Vagina (tissue), 2 donors: ENCODE measurements at regions of chr9 and their contacts with region 1.

Region 1: DNA sequence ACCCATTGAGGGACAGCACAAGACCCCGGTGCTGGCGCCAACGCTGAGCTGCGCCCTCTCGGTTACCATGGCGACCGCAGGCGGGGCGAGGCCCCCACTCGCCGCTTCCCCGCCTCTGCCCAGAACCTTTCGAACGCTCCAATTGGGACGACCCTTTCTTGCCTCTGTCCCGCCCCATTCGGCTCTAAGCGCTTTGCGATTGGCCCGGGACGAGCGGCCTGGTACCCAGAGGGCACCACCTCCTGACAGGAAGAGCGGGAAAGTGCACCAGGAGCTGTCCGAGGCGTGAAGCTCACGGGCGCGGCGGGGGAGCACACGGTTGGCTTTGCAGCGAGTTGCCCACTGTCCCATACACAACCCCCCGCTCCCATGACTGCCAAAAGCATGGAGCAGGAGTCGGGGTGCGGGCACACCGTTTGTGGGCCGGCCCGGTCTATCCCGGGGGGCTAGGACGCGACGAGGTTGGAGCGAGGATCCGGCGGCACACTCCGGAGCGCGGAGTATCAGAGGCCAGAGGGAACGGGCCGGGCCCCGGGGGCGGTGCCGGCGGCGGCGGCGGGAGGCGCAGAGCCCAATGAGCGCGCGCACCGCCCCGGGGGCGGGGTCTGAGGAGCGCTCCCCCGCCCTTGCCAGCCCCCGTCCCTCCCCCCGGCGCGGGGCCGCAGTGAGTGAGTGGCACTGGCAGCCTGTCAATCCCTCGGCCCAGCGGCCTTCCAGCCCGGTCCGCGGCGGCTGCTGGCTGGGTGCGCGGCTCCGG is 978 bp upstream of the PBX3 start:
- DNase-seq: peak in 1 of 2 donors; percentile 97
- H3K4me3 ChIP-seq: peak overlapping the region; percentile 70 to 76
- H3K27ac ChIP-seq: peak overlapping the region; percentile 91
- H3K4me1 ChIP-seq: peaks cover 19% of the 10 kb centered on the region
- H3K27me3 ChIP-seq: no peaks in the 10 kb centered on the region
- CTCF ChIP-seq: no peak
- POLR2A ChIP-seq: peak in 1 of 2 donors; percentile 65

Region 2: GRCh38 chr9:125843646-125844045 is 97.5 kb after region 1 on chr9:
- intact Hi-C with region 1: loop called (anchors 5 kb)
- DNase-seq: no peak
- H3K4me3 ChIP-seq: no peak overlapping the region
- H3K27ac ChIP-seq: no peak overlapping the region
- H3K4me1 ChIP-seq: peaks cover 10% of the 10 kb centered on the region
- H3K27me3 ChIP-seq: no peaks in the 10 kb centered on the region
- CTCF ChIP-seq: no peak
- POLR2A ChIP-seq: no peak

Region 3: GRCh38 chr9:125889476-125890419 is 143.6 kb after region 1 on chr9:
- intact Hi-C with region 1: loop called (anchors 10 kb)
- DNase-seq: no peak
- H3K4me3 ChIP-seq: peak overlapping the region; percentile 48 to 55
- H3K27ac ChIP-seq: peak overlapping the region; percentile 76
- H3K4me1 ChIP-seq: peaks cover 21% of the 10 kb centered on the region
- H3K27me3 ChIP-seq: no peaks in the 10 kb centered on the region
- CTCF ChIP-seq: no peak
- POLR2A ChIP-seq: no peak